ENCODE measurements at regions of chr7 and their contacts with region 1.

Region 1: DNA sequence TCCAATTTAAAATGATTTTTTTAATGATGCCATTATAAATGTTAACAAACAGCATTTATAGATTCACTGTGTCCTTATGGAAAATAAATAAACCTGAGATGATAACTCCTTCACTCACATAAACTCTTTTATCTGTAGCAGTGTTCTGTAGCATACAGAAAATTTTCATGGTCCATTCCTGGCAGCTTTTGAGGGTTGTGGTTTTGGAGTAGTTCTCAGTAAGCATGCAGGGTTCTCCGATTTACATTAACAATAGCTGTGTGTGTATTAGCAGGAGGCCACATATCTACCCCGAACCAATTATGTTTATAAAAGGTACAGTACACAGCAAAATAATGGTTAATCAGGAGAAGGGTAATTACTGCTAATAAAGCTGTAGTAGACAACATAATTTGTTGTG is 162.7 kb downstream of the CDCA7L start:
- DNase-seq: no peak
- CTCF ChIP-seq: no peak

Region 2: GRCh38 chr7:22001345-22002004 is 218.5 kb after region 1 on chr7:
- in situ Hi-C with region 1: loop called (anchors 25 kb)
- DNase-seq: peak; percentile 72
- CTCF ChIP-seq: peak; percentile 68